ENCODE measurements at regions of chrX and their contacts with region 1.

Region 1: GRCh38 chrX:103629318-103630170 is 769 bp downstream of the TCEAL1 start:
- DNase-seq: peak; percentile 67
- ATAC-seq: peak; percentile 87
- H3K4me3 ChIP-seq: peak overlapping the region; percentile 81
- H3K27ac ChIP-seq: peak overlapping the region; percentile 98
- H3K4me1 ChIP-seq: no peaks in the 10 kb centered on the region
- H3K27me3 ChIP-seq: no peaks in the 10 kb centered on the region
- CTCF ChIP-seq: peak; percentile 62
- POLR2A ChIP-seq: no peak
- RAD21 ChIP-seq: peak; percentile 34; the same call in 1 of the 2 replicates

Region 2: DNA sequence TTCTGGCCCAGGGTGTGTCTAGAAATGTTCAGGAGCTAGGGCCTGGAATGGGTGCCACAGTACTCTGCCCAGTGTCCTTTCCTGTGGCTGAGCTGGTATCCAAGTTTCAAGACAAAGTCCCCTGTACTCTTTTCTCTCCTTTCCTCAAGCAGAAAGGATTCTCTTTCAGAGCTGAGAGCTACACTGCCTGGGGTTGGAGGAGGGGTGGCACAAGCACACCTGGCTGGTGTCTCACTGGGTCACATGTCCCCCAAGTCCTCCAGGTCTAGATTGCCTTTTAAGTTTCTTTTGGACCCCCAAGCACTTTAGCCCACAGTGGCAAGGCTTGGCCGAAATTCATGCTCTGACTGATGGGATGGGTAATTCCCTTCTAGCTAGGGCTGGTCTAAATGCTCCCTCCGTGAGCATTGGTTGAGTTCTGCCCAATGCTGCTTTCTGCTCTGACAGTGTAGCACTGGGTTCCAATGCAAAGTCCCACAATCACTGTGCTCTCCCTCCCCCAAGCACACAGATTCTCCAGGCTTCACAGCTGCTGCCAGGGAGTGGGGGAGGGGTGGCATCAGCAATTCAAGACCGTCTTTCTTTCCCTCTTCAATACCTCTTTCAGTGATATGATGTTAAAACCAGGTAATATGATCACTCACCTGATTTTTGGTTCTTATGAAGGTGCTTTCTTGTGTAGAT is 205.4 kb before region 1 on chrX:
- CTCF ChIA-PET with region 1: no interaction called
- POLR2A ChIA-PET with region 1: no interaction called
- dilution Hi-C with region 1: no loop called
- in situ Hi-C with region 1: no loop called
- intact Hi-C with region 1: no loop called
- DNase-seq: no peak
- ATAC-seq: no peak
- H3K4me3 ChIP-seq: no peak overlapping the region
- H3K27ac ChIP-seq: no peak overlapping the region
- H3K4me1 ChIP-seq: no peaks in the 10 kb centered on the region
- H3K27me3 ChIP-seq: no peaks in the 10 kb centered on the region; the same call in 1 of the 2 replicates
- CTCF ChIP-seq: no peak
- POLR2A ChIP-seq: no peak
- RAD21 ChIP-seq: no peak

Region 3: GRCh38 chrX:103540145-103540544 is 89.4 kb before region 1 on chrX:
- CTCF ChIA-PET with region 1: no interaction called
- POLR2A ChIA-PET with region 1: no interaction called
- dilution Hi-C with region 1: no loop called
- in situ Hi-C with region 1: no loop called
- intact Hi-C with region 1: loop called (anchors 5 kb)
- DNase-seq: peak; percentile 58
- ATAC-seq: peak; percentile 72
- H3K4me3 ChIP-seq: no peak overlapping the region
- H3K27ac ChIP-seq: no peak overlapping the region
- H3K4me1 ChIP-seq: peaks cover 2% of the 10 kb centered on the region
- H3K27me3 ChIP-seq: peaks cover 6% of the 10 kb centered on the region
- CTCF ChIP-seq: no peak
- POLR2A ChIP-seq: no peak
- RAD21 ChIP-seq: no peak

Region 4: GRCh38 chrX:103573208-103573607 is 56.3 kb before region 1 on chrX:
- CTCF ChIA-PET with region 1: no interaction called
- POLR2A ChIA-PET with region 1: no interaction called
- dilution Hi-C with region 1: no loop called
- in situ Hi-C with region 1: no loop called
- intact Hi-C with region 1: loop called (anchors 10 kb)
- DNase-seq: no peak
- ATAC-seq: no peak
- H3K4me3 ChIP-seq: no peak overlapping the region
- H3K27ac ChIP-seq: no peak overlapping the region
- H3K4me1 ChIP-seq: no peaks in the 10 kb centered on the region
- H3K27me3 ChIP-seq: peaks cover 3% of the 10 kb centered on the region; the same call in 1 of the 2 replicates
- CTCF ChIP-seq: no peak
- POLR2A ChIP-seq: no peak
- RAD21 ChIP-seq: no peak

Region 5: GRCh38 chrX:103674531-103675454 is 45.2 kb after region 1 on chrX:
- CTCF ChIA-PET with region 1: interaction called, 6 read pairs
- POLR2A ChIA-PET with region 1: interaction called, 3 read pairs
- dilution Hi-C with region 1: no loop called
- in situ Hi-C with region 1: no loop called
- intact Hi-C with region 1: loop called (anchors 5 kb)
- DNase-seq: peak; percentile 3
- ATAC-seq: no peak; the same call in 1 of the 2 replicates
- H3K4me3 ChIP-seq: no peak overlapping the region
- H3K27ac ChIP-seq: no peak overlapping the region
- H3K4me1 ChIP-seq: no peaks in the 10 kb centered on the region
- H3K27me3 ChIP-seq: peaks cover 3% of the 10 kb centered on the region; the same call in 1 of the 2 replicates
- CTCF ChIP-seq: no peak
- POLR2A ChIP-seq: no peak; the same call in 1 of the 2 replicates
- RAD21 ChIP-seq: no peak

Region 6: GRCh38 chrX:103904301-103904700 is 274.8 kb after region 1 on chrX:
- CTCF ChIA-PET with region 1: no interaction called
- POLR2A ChIA-PET with region 1: no interaction called
- dilution Hi-C with region 1: no loop called
- in situ Hi-C with region 1: no loop called
- intact Hi-C with region 1: no loop called
- DNase-seq: no peak
- ATAC-seq: no peak
- H3K4me3 ChIP-seq: no peak overlapping the region
- H3K27ac ChIP-seq: no peak overlapping the region
- H3K4me1 ChIP-seq: no peaks in the 10 kb centered on the region
- H3K27me3 ChIP-seq: peaks cover 1% of the 10 kb centered on the region
- CTCF ChIP-seq: no peak
- POLR2A ChIP-seq: no peak
- RAD21 ChIP-seq: no peak

Measured in IMR-90 (cell line).